ENCODE measurements at regions of chr17 and their contacts with region 1.

Region 1: DNA sequence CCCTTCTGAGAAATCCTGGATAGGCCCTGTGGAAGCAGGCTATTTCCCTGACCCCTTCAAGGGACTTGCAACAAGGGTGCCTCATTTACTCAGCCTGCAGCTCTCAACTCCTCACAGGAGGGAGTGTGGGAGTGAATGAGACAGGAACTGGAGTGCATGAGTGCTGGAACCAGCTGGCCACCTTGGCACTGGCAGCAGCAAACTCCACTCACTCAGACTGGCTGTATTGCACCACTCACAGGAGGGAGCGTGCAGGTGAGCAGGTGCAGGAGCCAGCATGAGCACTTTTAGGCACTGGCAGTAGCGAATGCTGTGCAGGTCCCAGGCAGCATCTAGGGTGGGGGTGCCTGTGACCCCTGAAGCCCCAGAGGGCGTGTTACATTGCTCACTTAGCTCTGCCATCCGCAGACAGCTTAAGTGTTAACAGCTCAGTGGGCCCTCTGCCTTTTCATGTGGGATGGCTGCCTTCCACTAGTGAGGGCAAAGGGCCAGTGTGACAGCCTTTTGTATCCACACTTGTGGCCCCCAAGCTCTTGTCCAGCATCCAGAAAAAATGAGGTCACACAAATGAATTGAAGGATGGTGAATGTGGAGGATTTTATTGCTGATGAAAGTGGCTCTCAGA is 11.0 kb upstream of the ZNHIT3 start:
- DNase-seq: no peak
- H3K4me3 Mint-ChIP-seq: no peak overlapping the region
- H3K27ac Mint-ChIP-seq: no peak overlapping the region
- H3K4me1 Mint-ChIP-seq: no peaks in the 10 kb centered on the region
- H3K27me3 Mint-ChIP-seq: peaks cover 100% of the 10 kb centered on the region
- CTCF ChIP-seq: no peak

Region 2: GRCh38 chr17:36460265-36460937 is 15.1 kb before region 1 on chr17:
- CTCF ChIA-PET with region 1: no interaction called
- intact Hi-C with region 1: loop called (anchors 2 kb)
- DNase-seq: no peak
- H3K4me3 Mint-ChIP-seq: no peak overlapping the region
- H3K27ac Mint-ChIP-seq: no peak overlapping the region
- H3K4me1 Mint-ChIP-seq: no peaks in the 10 kb centered on the region
- H3K27me3 Mint-ChIP-seq: peaks cover 61% of the 10 kb centered on the region
- CTCF ChIP-seq: no peak

Measured in Calu3 (cell line).